Colonic mucosa (tissue), 4 donors: ENCODE measurements at regions of chr13 and their contacts with region 1.

Region 1: DNA sequence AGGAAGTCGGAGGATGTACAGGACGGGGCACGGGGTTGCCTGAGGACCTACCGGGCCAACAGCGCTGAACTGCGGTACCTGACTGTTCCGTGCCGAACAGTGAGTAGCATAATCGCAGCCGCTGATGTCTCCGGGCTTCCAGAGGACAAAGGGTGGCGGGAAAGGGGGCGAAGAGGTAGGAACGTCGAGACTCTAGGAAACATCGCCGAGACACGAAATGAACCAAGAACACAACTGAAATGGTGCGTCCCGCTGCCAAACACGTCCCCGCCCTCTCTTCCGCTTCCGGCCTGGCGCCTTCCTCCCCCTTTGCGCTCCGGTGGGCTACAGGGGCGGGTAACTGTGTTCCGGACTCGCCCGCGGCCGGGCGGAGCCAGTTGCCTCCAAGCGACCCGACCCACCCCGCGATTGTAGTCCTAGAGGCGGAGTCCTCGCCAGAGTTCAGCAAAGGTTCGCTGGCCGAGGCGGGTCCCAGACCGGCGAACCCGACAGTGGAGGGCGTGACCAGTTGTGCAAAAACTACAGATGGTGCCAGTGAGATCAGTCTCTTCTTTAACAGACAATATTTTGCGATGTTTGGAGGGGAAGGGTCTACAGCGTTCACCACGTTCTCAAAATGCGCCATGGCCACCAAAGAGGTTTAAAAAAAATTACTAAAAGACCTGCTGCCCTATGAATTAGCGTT is at the start of gene MRPS31:
- DNase-seq: peak; percentile 98
- H3K4me3 ChIP-seq: peak within 1 kb of the TSS; percentile 65
- H3K27ac ChIP-seq: peak within 1 kb of the TSS; percentile 79
- H3K4me1 ChIP-seq: no peaks in the 10 kb centered on the region
- H3K27me3 ChIP-seq: no peaks in the 10 kb centered on the region
- CTCF ChIP-seq: no peak
- total RNA-seq, gene MRPS31: 18.1 to 21.7 TPM

Region 2: DNA sequence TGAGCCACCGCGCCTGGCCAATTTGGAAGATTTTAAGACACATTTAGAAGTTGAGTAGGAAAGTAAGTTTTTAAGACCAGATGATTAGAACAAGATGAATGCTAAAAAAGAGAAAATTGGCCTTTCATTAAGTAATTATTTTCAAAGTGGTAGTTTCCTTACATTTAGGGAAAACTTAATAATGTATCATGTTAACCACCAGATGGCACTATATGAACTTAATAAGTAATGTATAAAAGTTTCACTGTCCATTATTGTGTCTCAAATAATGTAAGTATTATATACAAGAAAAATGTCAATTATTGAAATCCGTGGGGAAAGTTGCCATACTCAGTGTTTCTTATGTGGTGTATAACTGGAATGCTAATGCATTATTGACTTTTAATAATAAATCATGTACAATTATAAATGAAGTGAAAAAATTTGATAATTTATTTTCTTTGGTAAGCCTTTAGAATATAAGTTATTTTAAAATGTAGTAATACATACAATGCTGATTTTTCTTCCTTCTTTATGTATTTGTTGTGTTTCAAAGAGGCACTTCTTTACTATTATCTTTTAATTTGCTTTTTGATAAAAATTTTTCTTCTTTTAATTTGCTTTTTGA is 1086.4 kb before region 1 on chr13:
- intact Hi-C with region 1: loop called (anchors 10 kb)
- DNase-seq: no peak
- H3K4me3 ChIP-seq: no peak overlapping the region
- H3K27ac ChIP-seq: no peak overlapping the region
- H3K4me1 ChIP-seq: no peaks in the 10 kb centered on the region
- H3K27me3 ChIP-seq: no peaks in the 10 kb centered on the region
- CTCF ChIP-seq: no peak

Region 3: DNA sequence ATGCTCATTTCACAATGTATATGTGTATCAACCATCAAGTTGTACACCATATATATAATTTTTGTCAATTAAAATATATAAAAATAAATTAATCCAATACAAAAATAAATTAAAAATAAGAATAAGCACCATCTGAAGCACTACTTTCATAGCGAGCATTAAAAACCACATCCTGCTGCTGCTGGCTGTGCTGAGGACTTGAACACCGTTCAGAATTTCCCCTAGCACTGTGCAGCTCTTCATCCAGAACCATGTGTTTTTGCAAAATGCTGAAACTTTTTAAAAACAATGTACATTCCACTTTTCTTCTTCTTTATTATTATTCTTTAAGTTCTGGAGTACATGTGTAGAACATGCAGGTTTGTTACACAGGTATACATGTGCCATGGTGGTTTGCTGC is 64.6 kb before region 1 on chr13:
- intact Hi-C with region 1: no loop called
- DNase-seq: no peak
- H3K4me3 ChIP-seq: no peak overlapping the region
- H3K27ac ChIP-seq: no peak overlapping the region
- H3K4me1 ChIP-seq: no peaks in the 10 kb centered on the region
- H3K27me3 ChIP-seq: no peaks in the 10 kb centered on the region
- CTCF ChIP-seq: no peak

Region 4: DNA sequence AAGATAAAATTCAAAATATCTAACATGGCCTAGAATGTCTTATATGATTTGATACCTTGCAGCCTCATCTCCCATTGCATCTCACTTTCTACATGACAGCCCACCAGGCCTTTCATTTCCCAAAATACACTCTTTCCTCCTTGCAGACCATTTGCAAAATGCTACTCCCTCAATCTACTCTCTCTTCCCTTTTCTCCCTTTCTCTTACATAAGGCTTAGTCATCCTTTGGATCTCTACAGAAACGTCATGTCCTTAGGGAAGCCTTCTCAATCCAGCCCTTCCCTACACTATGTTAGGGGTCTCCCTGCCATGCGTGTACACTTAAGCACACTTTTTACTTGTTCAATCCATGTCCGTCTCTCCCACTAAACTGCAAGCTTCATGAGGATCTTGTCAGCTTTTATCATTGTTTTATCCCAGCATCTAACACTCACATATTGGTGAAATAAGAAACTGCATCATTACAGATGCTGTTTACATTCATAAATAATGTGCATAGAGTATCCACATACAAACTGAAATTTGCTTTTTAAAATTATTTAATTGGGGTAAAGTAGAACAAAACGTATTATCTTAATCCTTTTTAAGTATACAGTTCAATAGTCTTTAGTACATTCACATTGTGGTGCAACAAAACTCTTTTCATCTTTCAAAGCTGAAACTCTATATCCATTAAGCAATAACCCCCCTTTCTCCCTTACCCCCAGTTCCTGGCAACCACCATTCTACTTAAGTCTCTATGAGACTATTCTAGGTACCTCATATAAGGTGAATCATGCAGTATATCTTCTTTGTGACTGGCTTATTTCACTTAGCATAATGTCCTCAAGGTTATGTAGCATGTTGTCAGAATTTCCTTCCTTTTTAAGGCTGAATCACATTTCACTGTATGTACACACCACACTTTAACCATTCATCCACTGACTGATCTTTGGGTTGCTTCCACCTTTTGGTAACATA is 278.7 kb after region 1 on chr13:
- intact Hi-C with region 1: no loop called
- DNase-seq: no peak
- H3K4me3 ChIP-seq: no peak overlapping the region
- H3K27ac ChIP-seq: no peak overlapping the region
- H3K4me1 ChIP-seq: peaks cover 8% of the 10 kb centered on the region
- H3K27me3 ChIP-seq: no peaks in the 10 kb centered on the region
- CTCF ChIP-seq: no peak